ENCODE measurements at regions of chr3 and their contacts with region 1.

Region 1: GRCh38 chr3:18444595-18445400 is 19.7 kb upstream of the SATB1 start:
- DNase-seq: peak; percentile 40 to 75
- H3K4me3 ChIP-seq: peak overlapping the region; percentile 98
- H3K27ac ChIP-seq: no peak overlapping the region
- H3K4me1 ChIP-seq: peaks cover 24% of the 10 kb centered on the region
- H3K27me3 ChIP-seq: no peaks in the 10 kb centered on the region
- CTCF ChIP-seq: no peak

Region 2: DNA sequence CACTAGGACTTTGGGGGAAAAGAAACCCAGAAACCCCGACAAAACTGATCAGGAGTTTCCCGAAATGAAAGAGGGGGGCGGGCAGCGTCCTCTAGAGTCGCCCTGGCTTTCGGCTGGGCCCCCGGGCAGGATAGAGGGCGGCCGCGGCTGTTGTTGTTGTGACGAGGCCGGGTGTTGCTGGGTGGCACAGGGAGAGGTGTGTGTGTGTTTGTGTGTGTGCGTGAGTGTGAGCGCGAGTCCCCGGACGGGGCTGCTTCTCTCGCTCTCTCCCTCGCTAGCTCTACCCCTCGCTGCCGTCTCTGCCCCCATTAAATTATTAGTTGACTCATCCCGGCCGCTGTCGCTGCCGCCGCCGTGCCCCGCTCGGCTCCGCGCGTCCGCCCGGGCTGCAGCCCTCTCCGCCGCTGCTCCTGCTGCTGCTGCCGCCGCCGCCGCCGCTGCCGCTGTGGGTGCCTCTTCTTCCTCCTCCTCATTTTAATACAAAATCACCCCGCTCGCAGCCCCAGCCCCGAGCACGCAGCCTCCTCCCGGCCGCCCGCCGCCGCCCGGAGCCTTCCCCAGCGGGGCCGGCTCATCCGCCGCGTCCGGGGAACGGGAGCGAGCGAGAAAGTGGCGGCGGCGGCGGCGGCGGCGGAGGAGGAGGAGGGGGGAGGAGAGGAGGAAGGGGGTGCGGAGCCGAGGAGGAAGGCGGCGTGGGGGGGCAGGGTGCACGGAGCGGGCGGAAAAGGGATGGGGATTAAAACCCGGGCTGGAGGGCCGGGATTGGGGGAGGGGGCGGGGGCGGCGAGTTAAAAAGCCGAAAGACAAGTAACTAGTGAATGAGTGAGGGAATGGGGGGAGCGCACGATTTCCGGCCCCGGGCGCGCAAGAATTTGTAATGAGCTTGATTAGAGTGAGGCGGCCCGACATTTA is 19.8 kb before region 1 on chr3 and contains the start of gene SATB1:
- CTCF ChIA-PET with region 1: no interaction called
- POLR2A ChIA-PET with region 1: no interaction called
- intact Hi-C with region 1: loop called (anchors 1 kb)
- DNase-seq: peak in 1 of 2 experiments; percentile 69
- H3K4me3 ChIP-seq: peak within 1 kb of the TSS; percentile 86
- H3K27ac ChIP-seq: peak within 1 kb of the TSS; percentile 50
- H3K4me1 ChIP-seq: peaks cover 26% of the 10 kb centered on the region
- H3K27me3 ChIP-seq: no peaks in the 10 kb centered on the region
- CTCF ChIP-seq: no peak
- total RNA-seq, gene SATB1: 25.4 and 28.7 TPM in 2 replicates

Region 3: DNA sequence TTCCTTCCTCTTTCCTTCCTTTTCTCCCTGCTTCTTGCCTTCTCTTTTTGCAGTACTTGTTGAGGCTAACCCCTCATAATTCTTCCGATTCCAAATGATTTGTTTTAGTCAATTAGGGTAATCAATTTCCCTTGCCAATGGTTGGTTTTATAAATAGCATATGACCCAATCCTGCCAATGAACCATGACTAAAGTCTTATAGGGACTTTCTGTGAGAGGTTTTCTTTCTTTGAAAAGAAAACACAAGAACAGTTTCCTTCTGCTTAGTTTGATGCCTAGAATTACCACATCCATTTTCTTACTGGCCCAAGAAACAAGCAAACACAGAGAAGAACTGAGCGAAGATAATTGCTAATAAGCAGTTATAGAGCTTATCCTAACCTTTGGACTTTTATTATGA is 272.8 kb after region 1 on chr3:
- CTCF ChIA-PET with region 1: no interaction called
- POLR2A ChIA-PET with region 1: no interaction called
- intact Hi-C with region 1: no loop called
- DNase-seq: no peak
- H3K4me3 ChIP-seq: no peak overlapping the region
- H3K27ac ChIP-seq: no peak overlapping the region
- H3K4me1 ChIP-seq: no peaks in the 10 kb centered on the region
- H3K27me3 ChIP-seq: no peaks in the 10 kb centered on the region
- CTCF ChIP-seq: no peak

Region 4: DNA sequence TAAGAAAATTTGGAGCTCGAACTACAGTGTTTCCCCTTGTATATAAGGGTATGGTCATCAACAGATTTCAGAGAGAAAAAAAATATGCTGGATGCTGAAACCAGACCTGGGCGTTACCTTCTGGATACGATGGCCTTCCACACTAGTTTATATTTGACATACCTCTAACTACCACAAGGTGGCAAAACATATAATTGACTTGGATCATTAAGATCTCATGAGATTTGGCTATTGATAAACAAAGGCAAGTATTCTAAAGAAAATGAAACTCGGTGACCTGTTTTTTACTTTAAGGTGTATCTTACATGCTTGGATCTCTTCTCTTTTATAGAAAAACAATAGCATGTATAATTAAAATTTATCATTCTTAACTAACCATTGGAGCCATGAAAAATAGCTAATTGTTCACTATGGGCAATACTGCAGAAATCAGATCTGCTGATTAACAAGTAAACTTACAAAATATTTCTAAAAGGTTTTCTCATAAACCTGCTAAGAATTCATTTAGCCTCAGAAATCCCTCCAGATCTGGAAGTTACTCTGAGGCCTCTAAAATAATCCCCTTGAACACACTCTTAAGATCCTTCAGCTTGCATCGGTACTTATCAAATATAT is 402.9 kb after region 1 on chr3:
- CTCF ChIA-PET with region 1: no interaction called
- POLR2A ChIA-PET with region 1: no interaction called
- intact Hi-C with region 1: no loop called
- DNase-seq: no peak
- H3K4me3 ChIP-seq: no peak overlapping the region
- H3K27ac ChIP-seq: no peak overlapping the region
- H3K4me1 ChIP-seq: no peaks in the 10 kb centered on the region
- H3K27me3 ChIP-seq: no peaks in the 10 kb centered on the region
- CTCF ChIP-seq: peak; percentile 72

Measured in PC-9 (cell line).